ENCODE measurements at regions of chr11 and their contacts with region 1.

Region 1: DNA sequence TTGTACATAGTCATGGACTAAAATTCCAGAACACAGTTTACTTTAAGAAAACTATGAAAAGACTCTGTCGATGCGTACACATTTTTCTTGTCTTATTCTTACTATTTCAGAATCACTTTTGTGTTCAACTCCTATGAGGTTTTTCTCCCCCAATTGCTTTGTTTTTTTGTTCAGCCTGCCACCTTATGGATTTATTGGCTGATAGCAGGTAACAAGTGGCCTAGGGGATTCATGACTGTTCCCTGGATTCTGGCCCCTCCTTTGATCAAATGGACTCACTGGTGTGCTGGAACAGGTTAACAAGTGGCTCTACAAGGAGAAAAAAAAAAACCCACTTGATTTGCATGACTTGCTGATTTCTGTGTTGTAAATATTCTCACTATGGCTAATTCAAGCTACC is 10.6 kb downstream of the MMP20 start:
- DNase-seq: no peak
- CTCF ChIP-seq: peak; percentile 37

Region 2: DNA sequence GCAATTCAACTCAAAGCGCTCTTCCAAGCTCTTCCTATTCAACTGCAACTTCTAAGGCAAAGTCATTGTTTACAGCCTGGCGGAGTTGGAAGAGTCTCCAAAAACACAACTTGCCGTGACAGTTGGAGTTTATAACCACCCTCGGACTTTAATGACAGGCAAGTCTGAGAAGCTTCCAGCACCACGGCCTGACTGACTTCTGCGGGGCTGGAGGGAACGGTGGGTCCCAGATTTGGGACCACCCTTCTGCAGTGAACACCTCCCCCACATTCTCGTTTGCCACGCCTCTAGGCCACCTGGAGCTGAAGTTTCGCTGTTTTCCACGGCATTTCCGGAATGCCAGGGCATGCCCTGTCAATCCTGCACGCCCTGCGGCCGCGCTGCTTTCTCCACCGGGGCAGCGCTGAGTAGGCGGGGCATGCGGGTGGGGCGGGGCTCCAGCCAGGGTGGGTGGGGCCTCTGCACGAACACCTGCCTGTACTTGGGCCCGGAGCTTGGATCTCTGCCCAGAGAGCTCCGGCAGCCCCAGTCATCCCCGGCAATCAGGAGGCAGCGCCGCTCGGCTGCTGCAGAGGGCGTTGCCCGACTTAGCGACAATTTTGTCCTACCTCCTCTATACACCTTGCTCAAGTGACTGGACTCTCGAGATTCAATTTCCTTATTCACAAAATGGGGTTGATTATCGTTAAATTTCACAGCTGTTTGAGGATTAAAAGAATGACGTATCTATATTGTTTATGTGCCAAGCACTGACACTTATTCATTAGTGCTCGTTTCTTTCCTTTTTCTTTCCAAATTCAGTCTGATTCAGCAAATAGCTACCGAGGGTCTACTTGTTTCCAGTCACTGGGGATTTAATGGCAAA is 345.9 kb before region 1 on chr11:
- CTCF ChIA-PET with region 1: interaction called, 14 read pairs
- POLR2A ChIA-PET with region 1: no interaction called
- DNase-seq: peak; percentile 91
- CTCF ChIP-seq: peak; percentile 51

Region 3: DNA sequence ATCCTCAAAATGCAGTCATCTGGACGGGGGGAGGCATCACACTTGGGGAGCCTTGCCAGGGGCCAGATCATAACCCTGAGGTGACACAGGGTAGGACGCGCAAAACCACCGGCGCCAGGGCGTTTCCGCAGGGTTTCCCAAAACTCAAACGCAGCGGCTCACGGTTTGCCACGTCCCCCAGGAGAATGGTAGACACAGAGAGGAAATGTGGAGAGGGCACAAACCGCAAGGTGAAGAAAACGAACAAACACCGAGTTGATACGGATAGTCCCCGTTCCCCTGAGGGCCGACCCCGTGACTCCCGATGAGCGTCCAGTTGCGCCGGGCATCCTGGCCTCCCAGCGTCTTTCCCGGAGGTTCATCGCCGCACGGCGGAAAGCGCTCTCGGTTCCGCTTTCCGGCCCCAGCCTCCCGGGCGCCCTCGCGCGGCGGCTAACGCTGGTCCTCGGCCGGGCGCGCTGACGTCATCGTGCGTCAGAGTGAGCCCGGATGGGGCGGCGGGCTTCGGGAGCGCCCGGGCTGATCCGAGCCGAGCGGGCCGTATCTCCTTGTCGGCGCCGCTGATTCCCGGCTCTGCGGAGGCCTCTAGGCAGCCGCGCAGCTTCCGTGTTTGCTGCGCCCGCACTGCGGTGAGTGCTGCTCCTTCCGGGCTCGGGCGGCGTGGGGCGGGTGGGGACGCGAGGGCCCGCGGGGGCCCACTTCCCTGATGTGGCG is 267.6 kb before region 1 on chr11 and contains the start of gene BIRC2:
- CTCF ChIA-PET with region 1: interaction called, 213 read pairs
- POLR2A ChIA-PET with region 1: interaction called, 3 read pairs
- DNase-seq: peak; percentile 90
- CTCF ChIP-seq: peak; percentile 90

Region 4: DNA sequence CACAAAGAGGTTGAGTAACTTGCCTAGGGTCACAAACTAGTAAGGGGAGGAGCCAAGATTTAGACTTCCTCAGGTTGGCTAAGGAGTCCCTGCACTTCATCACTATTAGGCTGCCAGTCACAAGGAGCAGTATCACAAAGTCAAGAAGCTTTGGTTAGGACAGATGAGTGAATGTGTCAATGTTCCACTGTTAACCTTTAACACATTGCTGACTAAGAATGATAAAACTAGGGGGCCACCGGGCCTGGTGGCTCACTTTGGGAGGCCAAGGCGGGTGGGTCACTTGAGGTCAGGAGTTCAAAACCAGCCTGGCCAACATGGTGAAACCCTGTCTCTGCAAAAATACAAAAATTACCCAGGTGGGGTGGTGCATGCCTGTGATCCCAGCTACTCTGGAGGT is 193.9 kb before region 1 on chr11:
- CTCF ChIA-PET with region 1: interaction called, 11 read pairs
- POLR2A ChIA-PET with region 1: no interaction called
- DNase-seq: no peak
- CTCF ChIP-seq: no peak

Region 5: GRCh38 chr11:102522312-102523188 is 91.9 kb before region 1 on chr11:
- CTCF ChIA-PET with region 1: interaction called, 14 read pairs
- POLR2A ChIA-PET with region 1: no interaction called
- DNase-seq: no peak
- CTCF ChIP-seq: no peak

Region 6: DNA sequence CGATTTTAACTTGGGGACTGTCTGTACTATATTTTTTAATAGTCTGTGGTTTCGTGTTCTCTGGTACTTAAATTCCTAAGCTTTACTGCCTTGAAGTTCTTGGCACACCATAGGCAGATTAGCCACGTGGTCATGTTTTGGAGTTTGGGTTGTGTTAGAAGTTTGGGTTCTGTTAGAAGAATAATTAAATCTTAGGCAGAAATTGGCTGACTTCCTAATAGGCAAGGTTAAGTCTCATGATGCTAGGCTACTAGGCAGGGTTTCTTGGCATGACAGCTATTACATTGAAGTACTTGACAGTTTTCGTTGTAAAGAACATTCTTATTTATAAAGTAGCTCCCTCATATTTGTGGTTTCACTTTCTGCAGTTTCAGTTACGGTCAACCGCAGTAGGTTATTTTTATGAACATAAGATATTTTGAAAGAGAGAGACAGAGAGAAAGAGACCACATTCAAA is 53.9 kb before region 1 on chr11:
- CTCF ChIA-PET with region 1: interaction called, 65 read pairs
- POLR2A ChIA-PET with region 1: no interaction called
- DNase-seq: peak; percentile 49
- CTCF ChIP-seq: no peak

Measured in GM10248 (cell line).